Transverse colon (tissue), 4 donors: ENCODE measurements at regions of chr10 and their contacts with region 1.

Region 1: DNA sequence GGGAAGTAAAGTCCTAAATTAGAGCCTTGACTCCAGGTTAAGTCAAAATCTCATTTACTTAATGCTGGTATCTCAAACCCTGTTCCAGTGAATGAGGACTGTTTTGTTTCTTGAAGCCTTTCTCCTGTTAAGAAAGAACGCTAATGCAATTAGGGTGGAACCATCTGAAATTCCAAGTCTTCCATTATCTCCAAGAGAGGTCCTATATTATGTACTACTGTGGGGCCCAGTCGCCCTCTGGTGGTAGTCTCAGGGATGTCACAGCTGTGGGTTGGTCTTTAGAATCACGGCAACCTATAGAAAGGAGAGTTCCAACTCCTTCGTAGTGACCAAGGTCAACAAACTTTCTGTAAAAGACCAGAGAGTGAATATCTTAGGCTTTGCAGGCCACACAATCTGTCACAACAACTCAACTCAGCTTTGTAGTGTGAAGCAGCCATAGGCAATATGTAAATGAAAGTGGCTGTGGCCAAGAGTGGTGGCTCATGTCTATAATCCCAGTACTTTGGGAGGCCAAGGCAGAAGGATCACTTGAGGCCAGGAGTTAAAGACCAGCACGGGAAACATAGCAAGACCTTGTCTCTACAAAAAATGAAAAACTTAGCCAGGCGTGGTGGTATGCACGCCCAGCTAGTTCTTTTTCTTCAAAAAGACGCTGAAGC is 9.3 kb downstream of the RPP38 start:
- DNase-seq: peak; percentile 82
- H3K4me3 ChIP-seq: no peak overlapping the region
- H3K27ac ChIP-seq: peak overlapping the region in 1 of 4 donors; percentile 4
- H3K4me1 ChIP-seq: peaks cover 0 to 20% (median 0%) of the 10 kb centered on the region in 4 donors
- H3K27me3 ChIP-seq: no peaks in the 10 kb centered on the region
- CTCF ChIP-seq: peak; percentile 85 to 91 (median 87)
- EP300 ChIP-seq: no peak
- POLR2A ChIP-seq: no peak

Region 2: GRCh38 chr10:13956826-13957225 is 1149.7 kb before region 1 on chr10:
- in situ Hi-C with region 1: no loop called
- intact Hi-C with region 1: no loop called
- DNase-seq: peak; percentile 29
- H3K4me3 ChIP-seq: no peak overlapping the region
- H3K27ac ChIP-seq: peak overlapping the region; percentile 36 to 60 (median 48)
- H3K4me1 ChIP-seq: no peaks in the 10 kb centered on the region
- H3K27me3 ChIP-seq: no peaks in the 10 kb centered on the region
- CTCF ChIP-seq: peak in 2 of 5 experiments; percentile 12 to 34
- EP300 ChIP-seq: no peak
- POLR2A ChIP-seq: no peak

Region 3: DNA sequence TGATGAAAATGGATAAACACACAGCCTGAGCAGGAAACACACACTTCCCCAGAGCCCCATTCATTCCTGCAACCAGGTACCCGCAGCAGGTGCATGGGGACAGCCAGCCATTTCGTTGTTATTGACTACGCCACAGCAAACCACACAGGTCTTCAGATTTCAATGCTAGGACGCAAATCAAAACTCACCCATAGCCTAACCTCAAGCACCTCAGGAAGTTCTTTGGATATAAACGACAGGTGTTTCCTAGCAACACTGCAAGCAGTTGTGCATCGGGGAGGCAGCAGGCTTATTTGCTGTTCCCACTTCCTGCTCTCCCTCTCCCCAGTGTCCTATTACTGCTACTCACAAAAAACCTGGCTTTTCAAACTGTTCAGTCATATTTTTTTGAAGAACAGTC is 599.3 kb before region 1 on chr10:
- in situ Hi-C with region 1: loop called in 1 of 4 experiments (anchors 25 kb)
- intact Hi-C with region 1: no loop called
- DNase-seq: no peak
- H3K4me3 ChIP-seq: no peak overlapping the region
- H3K27ac ChIP-seq: no peak overlapping the region
- H3K4me1 ChIP-seq: no peaks in the 10 kb centered on the region
- H3K27me3 ChIP-seq: no peaks in the 10 kb centered on the region
- CTCF ChIP-seq: no peak
- EP300 ChIP-seq: no peak
- POLR2A ChIP-seq: no peak

Region 4: DNA sequence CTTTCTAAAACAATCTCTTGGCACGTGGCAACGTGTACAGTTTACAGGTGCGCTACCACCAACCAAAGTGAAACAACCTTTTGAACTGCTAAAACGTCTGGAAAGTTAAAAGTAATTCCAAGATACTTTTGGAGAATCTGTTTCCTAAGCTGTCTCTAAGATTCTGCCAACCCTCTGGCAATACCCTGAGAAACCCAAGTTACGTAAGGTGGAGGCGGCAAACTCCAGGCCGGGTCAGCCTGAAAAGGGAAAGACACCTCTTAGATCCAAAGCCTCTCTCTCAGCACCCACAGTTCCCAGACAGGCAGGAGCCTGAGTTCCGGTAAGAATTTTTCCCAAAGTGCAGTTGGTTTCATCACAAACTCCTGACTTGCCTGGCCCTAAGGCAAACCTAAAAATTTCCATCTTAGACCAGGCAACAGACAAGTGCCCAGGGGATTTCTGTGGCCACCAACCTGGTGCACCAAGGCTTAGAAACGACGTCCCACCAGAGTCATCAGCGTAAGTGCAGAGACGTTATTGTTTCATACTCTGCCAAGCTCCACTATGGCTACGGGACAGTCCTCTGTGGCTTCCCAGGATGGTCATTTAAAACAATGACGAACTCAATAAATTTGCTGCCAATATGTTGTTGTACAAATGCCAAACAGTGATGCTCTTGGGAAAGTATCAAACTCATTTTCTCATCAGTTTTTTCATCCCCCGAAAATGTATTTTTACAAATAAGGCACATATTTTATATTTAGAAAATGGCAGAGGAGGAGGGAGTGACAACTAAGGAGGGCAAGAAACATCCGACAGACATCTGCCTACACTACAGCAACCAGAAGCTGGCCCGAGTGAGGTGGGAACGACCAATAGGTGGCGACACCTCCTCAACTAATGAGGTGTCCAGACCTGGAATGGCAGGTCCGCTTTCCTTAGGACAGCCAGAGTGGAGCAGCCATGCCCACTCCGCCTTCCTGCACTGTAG is 570.0 kb before region 1 on chr10:
- in situ Hi-C with region 1: loop called in 1 of 4 experiments (anchors 25 kb)
- intact Hi-C with region 1: no loop called
- DNase-seq: peak; percentile 82
- H3K4me3 ChIP-seq: no peak overlapping the region
- H3K27ac ChIP-seq: peak overlapping the region in 2 of 4 donors; percentile 5 to 6
- H3K4me1 ChIP-seq: peaks cover 0 to 30% (median 18%) of the 10 kb centered on the region in 4 donors
- H3K27me3 ChIP-seq: no peaks in the 10 kb centered on the region
- CTCF ChIP-seq: peak; percentile 57 to 65 (median 59)
- EP300 ChIP-seq: no peak
- POLR2A ChIP-seq: no peak

Region 5: DNA sequence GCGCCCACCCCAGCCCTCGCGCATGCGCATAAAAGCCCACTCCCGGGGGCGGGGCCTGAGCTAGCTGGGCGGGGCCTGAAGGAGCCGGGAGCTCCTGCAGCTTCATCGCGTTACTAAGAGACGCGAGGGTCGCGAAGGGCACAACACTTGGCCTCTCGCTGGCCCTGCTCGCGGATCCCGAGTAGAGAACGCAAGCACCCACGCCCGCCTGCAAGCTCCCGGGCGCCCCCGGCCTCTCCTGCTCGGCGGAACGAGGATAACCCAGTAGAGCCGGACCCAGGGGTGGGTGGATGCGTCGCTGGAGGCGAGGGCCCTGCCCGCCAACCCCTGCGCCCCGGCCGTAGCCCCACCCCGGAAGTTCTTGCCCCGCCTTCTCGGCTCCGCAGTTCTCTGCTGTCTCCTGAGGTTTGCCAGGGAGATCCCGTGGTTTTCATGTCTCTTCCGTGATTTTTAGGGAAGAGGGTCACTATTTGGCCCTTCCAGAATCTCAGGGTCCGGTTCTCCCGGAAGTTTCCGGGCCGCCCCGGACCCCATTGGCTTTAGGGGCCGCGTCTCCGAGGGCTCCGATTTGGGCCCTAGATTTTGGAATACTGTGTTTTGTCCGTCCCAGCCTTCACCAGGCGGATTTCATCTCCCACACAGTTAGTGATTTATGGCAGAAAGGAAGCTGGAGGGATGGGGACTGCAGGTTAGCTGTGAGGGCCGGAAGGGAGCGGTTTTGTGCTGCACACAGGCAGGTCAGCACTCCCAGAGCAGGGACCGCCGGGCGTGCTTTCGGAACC is 147.0 kb before region 1 on chr10 and contains the start of gene MEIG1:
- in situ Hi-C with region 1: loop called in 2 of 4 experiments (anchors 10 kb)
- intact Hi-C with region 1: no loop called
- DNase-seq: peak; percentile 94
- H3K4me3 ChIP-seq: peak within 1 kb of the TSS; percentile 56 to 71 (median 66)
- H3K27ac ChIP-seq: peak within 1 kb of the TSS; percentile 91 to 99 (median 96)
- H3K4me1 ChIP-seq: peaks cover 0 to 15% (median 10%) of the 10 kb centered on the region in 4 donors
- H3K27me3 ChIP-seq: no peaks in the 10 kb centered on the region
- CTCF ChIP-seq: no peak
- EP300 ChIP-seq: no peak
- POLR2A ChIP-seq: peak; percentile 69
- total RNA-seq, gene MEIG1: not detected